T-cell (primary cell): ENCODE measurements at regions of chr5 and their contacts with region 1.

Region 1: DNA sequence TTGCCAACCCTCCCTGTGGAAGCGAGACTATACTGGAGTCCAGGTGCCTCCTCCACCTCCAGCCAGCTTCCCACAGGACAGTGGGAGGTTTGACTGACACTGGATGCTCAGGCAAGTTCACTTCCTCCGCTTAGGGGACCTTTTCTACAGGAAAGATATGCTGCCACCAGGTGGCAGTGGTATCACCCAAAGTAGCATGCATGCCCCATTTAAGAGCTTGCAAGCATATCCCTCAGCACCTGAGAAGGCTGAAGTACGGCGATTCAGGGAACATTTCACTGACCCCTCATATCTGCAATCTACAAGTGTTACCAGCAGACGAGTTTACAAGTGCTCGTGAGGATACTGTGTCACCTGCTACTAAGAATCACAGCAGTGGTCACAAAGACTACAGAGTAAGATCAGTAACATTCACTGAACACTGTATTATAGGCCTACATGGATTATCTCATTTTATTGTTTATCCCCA is 75.5 kb downstream of the KLHL3 start:
- DNase-seq: peak; percentile 36 to 84 (median 65)
- ATAC-seq: peak; percentile 86 to 98 (median 92)
- H3K4me3 ChIP-seq: no peak overlapping the region
- H3K4me3 Mint-ChIP-seq: no peak overlapping the region
- H3K27ac ChIP-seq: no peak overlapping the region
- H3K27ac Mint-ChIP-seq: no peak overlapping the region
- H3K4me1 ChIP-seq: no peaks in the 10 kb centered on the region
- H3K4me1 Mint-ChIP-seq: peaks cover 10 to 18% (median 13%) of the 10 kb centered on the region in 3 donors
- H3K27me3 ChIP-seq: no peaks in the 10 kb centered on the region
- H3K27me3 Mint-ChIP-seq: no peaks in the 10 kb centered on the region

Region 2: DNA sequence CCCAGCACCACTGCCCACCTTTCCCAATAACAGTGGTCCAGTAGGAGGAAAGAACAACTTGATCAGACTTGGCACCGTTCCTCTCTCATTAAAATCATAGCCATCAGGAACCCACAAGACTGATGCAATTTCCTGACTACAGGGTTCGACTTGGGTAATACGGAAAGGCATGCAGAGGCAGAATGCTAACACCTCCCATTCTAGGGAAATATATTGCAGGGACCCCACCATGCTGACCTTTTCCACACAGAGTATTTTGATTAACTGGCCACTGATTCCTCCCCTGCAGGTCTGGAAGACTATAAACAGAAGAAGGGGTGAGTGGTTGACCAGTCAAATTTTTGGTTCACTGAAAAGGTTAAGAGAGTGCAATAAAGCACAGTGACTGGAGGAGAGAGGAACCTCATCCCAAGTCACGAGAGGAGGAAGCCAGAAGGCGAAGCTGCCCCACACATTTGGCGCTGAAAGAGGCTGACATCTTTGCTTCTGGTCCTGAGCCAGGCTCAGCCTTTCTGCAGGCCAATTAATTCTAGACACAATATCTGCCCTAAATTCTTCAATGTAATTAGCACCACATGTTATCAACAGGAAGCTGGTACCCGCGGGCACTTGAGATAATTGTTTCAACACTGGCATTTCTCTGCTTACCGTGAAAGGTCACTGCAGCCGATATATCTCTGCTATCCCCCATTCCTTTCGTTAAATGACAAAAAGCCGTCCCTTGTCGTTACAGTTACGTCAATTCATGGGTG is 96.6 kb before region 1 on chr5:
- CTCF ChIA-PET with region 1: no interaction called
- POLR2A ChIA-PET with region 1: no interaction called
- DNase-seq: no peak
- ATAC-seq: no peak
- H3K4me3 ChIP-seq: no peak overlapping the region
- H3K4me3 Mint-ChIP-seq: no peak overlapping the region
- H3K27ac ChIP-seq: no peak overlapping the region
- H3K27ac Mint-ChIP-seq: no peak overlapping the region
- H3K4me1 ChIP-seq: no peaks in the 10 kb centered on the region
- H3K4me1 Mint-ChIP-seq: peaks cover 0 to 8% (median 0%) of the 10 kb centered on the region in 3 donors
- H3K27me3 ChIP-seq: peaks cover 0 to 15% of the 10 kb centered on the region in 2 experiments
- H3K27me3 Mint-ChIP-seq: peaks cover 9 to 22% of the 10 kb centered on the region in 2 donors

Region 3: DNA sequence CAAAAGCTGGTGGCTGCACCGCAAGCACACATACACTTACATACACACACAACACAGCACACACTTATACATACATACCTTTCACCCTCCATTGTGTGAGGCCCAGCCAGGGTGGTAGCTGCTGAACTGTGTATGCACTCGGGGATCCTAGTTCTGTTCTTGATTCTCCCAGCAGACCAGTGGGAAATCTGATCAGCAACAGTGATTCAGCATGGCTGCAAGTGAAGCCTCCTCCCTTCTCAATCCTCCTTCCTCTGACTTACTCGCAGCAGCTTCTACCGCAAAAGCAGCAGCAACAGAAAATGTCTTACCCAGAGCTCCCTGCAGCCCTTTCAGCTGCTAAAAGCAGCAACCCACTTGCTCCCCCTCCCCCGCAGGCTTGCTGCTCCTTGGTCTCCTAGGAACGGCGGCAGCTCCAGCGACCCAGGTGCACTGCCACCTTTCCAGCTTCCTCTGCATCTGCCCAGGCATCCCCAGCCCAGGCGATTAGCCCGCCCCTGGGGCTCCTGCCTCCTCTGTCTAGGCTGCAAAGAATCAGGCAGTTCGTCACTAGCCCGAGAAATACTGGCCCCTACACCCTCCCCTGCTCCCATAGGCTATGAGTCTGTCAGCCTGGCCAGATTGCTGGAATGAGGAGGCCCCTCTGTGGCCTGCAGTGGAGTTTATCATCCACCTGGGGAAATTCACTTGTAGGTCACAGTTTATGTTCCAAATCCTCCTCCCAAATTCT is 75.3 kb after region 1 on chr5 and contains the start of gene KLHL3:
- CTCF ChIA-PET with region 1: interaction called, 109 to 229 read pairs
- POLR2A ChIA-PET with region 1: interaction called in 1 of 2 experiments, 4 read pairs
- DNase-seq: peak in 23 of 35 experiments; percentile 9 to 54 (median 28)
- ATAC-seq: peak; percentile 45 to 67 (median 62)
- H3K4me3 ChIP-seq: peak within 1 kb of the TSS; percentile 61 to 77
- H3K4me3 Mint-ChIP-seq: no peak within 1 kb of the TSS
- H3K27ac ChIP-seq: peak within 1 kb of the TSS; percentile 27
- H3K27ac Mint-ChIP-seq: no peak within 1 kb of the TSS
- H3K4me1 ChIP-seq: peaks cover 37 to 42% of the 10 kb centered on the region in 2 experiments
- H3K4me1 Mint-ChIP-seq: peaks cover under 1 to 13% (median 13%) of the 10 kb centered on the region in 3 donors
- H3K27me3 ChIP-seq: no peaks in the 10 kb centered on the region
- H3K27me3 Mint-ChIP-seq: no peaks in the 10 kb centered on the region
- total RNA-seq, gene KLHL3: 15.1 to 28.0 (median 26.5) TPM

Region 4: DNA sequence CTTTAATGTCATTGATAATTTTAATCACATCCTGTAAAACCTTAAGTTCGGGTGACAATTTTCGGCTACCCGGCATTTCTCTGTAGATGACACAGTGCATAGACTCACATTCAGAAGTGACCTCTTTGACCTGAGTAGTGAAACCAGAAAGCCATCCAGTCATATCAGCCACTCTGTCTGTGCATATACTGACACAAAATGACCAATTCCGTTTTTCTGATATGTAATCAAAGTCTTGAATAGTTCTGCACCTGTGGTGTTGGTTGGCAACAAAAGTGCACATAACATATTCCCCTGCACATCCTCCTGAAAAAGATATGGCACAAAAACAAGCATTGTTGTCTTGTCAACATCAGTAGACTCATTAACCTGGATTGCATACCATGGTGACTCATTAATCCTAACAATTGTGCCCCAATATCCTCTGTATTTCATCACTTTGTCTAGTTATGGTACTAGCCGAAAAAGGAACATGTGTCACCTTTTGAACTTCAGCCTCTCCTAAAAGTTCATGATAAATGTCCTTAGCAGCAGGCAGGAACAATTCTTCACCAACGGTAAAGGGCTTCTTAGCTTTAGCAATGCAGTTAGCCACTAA is 98.4 kb after region 1 on chr5:
- CTCF ChIA-PET with region 1: interaction called, 3 to 4 read pairs
- POLR2A ChIA-PET with region 1: interaction called in 1 of 2 experiments, 10 read pairs
- DNase-seq: no peak
- ATAC-seq: no peak
- H3K4me3 ChIP-seq: no peak overlapping the region
- H3K4me3 Mint-ChIP-seq: no peak overlapping the region
- H3K27ac ChIP-seq: no peak overlapping the region
- H3K27ac Mint-ChIP-seq: no peak overlapping the region
- H3K4me1 ChIP-seq: peaks cover 3 to 9% of the 10 kb centered on the region in 2 experiments
- H3K4me1 Mint-ChIP-seq: peaks cover 0 to 5% (median 5%) of the 10 kb centered on the region in 3 donors
- H3K27me3 ChIP-seq: no peaks in the 10 kb centered on the region
- H3K27me3 Mint-ChIP-seq: no peaks in the 10 kb centered on the region

Region 5: DNA sequence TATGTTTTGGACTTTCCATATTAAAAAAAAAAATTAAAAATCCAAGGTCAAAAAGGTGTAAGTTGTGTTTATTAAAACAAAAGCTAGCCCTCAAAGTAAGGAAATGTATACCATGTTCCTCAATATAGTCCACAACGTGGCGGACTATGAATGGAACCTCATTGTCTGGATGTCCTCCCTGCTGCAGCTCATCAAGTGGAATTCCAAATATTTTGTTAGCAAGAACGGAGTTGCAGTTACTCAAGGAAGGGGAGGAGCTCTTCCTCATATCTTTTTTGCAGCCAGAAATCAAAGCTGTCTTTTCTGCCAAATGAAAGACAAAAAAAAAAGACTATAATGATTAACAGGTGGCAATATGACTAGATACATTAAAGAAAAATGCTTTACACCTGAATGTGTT is 358.5 kb after region 1 on chr5:
- CTCF ChIA-PET with region 1: no interaction called
- POLR2A ChIA-PET with region 1: interaction called in 1 of 2 experiments, 14 read pairs
- DNase-seq: no peak
- ATAC-seq: no peak
- H3K4me3 ChIP-seq: no peak overlapping the region
- H3K4me3 Mint-ChIP-seq: no peak overlapping the region
- H3K27ac ChIP-seq: no peak overlapping the region
- H3K27ac Mint-ChIP-seq: no peak overlapping the region
- H3K4me1 ChIP-seq: peaks cover 3 to 10% of the 10 kb centered on the region in 2 experiments
- H3K4me1 Mint-ChIP-seq: peaks cover 40 to 49% (median 43%) of the 10 kb centered on the region in 3 donors
- H3K27me3 ChIP-seq: no peaks in the 10 kb centered on the region
- H3K27me3 Mint-ChIP-seq: no peaks in the 10 kb centered on the region